Vagina (tissue), 2 donors: ENCODE measurements at regions of chr9 and their contacts with region 1.

Region 1: GRCh38 chr9:16871356-16872151 is 1.1 kb upstream of the BNC2 start:
- DNase-seq: no peak
- H3K4me3 ChIP-seq: peak overlapping the region; percentile 74 to 78
- H3K27ac ChIP-seq: peak overlapping the region; percentile 92
- H3K4me1 ChIP-seq: peaks cover 36% of the 10 kb centered on the region
- H3K27me3 ChIP-seq: no peaks in the 10 kb centered on the region
- CTCF ChIP-seq: no peak
- POLR2A ChIP-seq: no peak

Region 2: DNA sequence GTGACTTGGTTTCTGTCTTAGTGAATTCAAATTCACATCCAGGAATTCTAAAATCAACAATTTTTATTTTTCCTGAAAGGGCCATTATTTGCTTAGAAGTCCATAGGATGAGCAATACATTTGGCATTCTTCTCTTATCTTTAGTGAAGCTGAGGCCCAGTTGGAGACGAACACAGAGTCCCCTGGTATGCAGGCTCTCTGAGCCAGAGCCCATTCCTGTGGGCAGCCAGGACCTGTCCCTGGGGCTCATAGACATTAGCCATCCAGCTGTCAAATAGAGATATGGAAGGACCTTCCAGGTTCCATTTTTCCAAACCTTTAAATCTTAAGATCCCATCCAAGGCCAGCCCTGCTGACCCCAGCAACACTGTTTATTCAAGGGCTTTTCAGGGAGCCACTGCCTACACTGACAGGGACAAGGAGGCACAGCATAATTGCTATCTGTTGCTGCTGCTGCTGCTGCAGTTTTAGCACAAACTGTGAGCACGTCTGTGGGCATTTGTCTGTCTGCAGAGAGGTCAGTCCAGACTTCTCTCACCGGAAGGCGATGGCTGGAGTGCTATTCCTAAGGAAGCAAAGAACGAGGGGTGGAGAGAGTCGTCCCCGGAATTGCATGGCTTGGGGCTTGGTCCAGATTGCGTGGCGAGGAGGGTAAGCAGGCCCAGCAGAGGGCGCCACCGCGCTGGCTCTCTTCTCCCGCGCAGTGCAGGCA is 679.7 kb before region 1 on chr9:
- intact Hi-C with region 1: loop called (anchors 10 kb)
- DNase-seq: no peak
- H3K4me3 ChIP-seq: no peak overlapping the region
- H3K27ac ChIP-seq: no peak overlapping the region
- H3K4me1 ChIP-seq: peaks cover 4% of the 10 kb centered on the region
- H3K27me3 ChIP-seq: no peaks in the 10 kb centered on the region
- CTCF ChIP-seq: peak in 2 of 3 experiments; percentile 59 to 64
- POLR2A ChIP-seq: no peak

Region 3: GRCh38 chr9:16715404-16715803 is 156.2 kb before region 1 on chr9:
- intact Hi-C with region 1: loop called (anchors 5 kb)
- DNase-seq: no peak
- H3K4me3 ChIP-seq: no peak overlapping the region
- H3K27ac ChIP-seq: no peak overlapping the region
- H3K4me1 ChIP-seq: peaks cover 22% of the 10 kb centered on the region
- H3K27me3 ChIP-seq: no peaks in the 10 kb centered on the region
- CTCF ChIP-seq: no peak
- POLR2A ChIP-seq: no peak

Region 4: GRCh38 chr9:16726718-16727451 is 144.7 kb before region 1 on chr9:
- intact Hi-C with region 1: loop called (anchors 5 kb)
- DNase-seq: no peak
- H3K4me3 ChIP-seq: peak overlapping the region; percentile 59 to 64
- H3K27ac ChIP-seq: peak overlapping the region; percentile 89
- H3K4me1 ChIP-seq: peaks cover 4% of the 10 kb centered on the region
- H3K27me3 ChIP-seq: no peaks in the 10 kb centered on the region
- CTCF ChIP-seq: no peak
- POLR2A ChIP-seq: peak in 1 of 2 donors; percentile 12

Region 5: GRCh38 chr9:16809912-16810610 is 61.5 kb before region 1 on chr9:
- intact Hi-C with region 1: no loop called
- DNase-seq: no peak
- H3K4me3 ChIP-seq: no peak overlapping the region
- H3K27ac ChIP-seq: no peak overlapping the region
- H3K4me1 ChIP-seq: no peaks in the 10 kb centered on the region
- H3K27me3 ChIP-seq: no peaks in the 10 kb centered on the region
- CTCF ChIP-seq: no peak
- POLR2A ChIP-seq: no peak

Region 6: DNA sequence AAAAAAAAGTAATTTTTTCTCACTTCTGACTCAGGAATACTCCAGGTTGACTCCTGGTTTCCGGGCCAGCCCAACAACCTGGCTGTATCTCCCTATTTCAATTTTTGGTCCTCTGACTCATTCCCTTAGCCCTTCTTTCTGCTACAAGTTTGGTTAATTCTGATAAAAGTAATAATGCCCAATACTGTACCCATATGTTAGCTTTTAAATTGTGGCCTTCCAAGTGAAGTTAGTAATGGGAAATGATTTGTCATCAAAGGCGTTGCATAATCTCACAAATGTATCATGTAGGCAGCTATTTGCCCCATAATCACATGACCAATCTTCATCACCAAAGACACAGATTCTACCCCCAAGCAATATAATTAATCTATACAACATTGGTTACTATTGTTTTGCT is 30.0 kb after region 1 on chr9:
- intact Hi-C with region 1: no loop called
- DNase-seq: no peak
- H3K4me3 ChIP-seq: no peak overlapping the region
- H3K27ac ChIP-seq: no peak overlapping the region
- H3K4me1 ChIP-seq: peaks cover 5% of the 10 kb centered on the region
- H3K27me3 ChIP-seq: no peaks in the 10 kb centered on the region
- CTCF ChIP-seq: no peak
- POLR2A ChIP-seq: no peak